CD8-positive, alpha-beta memory T cell (primary cell): ENCODE measurements at regions of chr4 and their contacts with region 1.

Region 1: DNA sequence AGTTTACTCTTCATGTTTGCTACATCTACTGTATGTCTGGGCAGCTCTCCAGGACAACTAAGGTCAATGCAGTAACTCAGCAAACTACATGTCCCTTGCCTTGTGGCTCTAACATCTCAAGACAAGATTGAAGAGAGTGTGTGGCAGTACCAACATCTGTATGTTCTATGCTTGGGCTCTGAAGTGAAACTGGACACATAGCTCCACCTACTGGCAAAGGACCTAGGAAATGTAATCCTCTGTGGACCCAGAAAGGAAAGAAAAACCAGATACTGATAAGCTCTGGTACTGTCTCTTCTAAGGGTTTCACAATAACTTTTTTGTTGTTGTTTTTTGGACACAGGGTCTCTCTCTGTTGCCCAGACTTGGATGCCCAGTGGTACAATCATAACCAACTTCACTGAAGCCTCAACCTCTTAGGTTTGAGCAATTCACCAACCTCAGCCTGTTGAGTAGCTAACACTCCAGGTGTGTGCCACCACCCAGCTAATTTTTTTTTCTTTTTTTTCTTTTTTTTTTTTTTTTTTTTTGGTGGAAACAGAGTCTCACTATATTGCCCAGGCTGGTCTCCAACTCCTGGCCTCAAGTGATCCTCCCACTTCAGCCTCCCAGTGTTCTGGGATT is 64.1 kb downstream of the QDPR start:
- DNase-seq: peak in 4 of 5 donors; percentile 34 to 53 (median 37)
- H3K4me3 ChIP-seq: no peak overlapping the region
- H3K4me3 Mint-ChIP-seq: no peak overlapping the region
- H3K27ac ChIP-seq: no peak overlapping the region
- H3K27ac Mint-ChIP-seq: no peak overlapping the region
- H3K4me1 ChIP-seq: no peaks in the 10 kb centered on the region
- H3K4me1 Mint-ChIP-seq: no peaks in the 10 kb centered on the region
- H3K27me3 ChIP-seq: no peaks in the 10 kb centered on the region
- H3K27me3 Mint-ChIP-seq: peaks cover 0 to 2% of the 10 kb centered on the region in 2 donors

Region 2: GRCh38 chr4:17324386-17324830 is 123.4 kb before region 1 on chr4:
- CTCF ChIA-PET with region 1: no interaction called
- POLR2A ChIA-PET with region 1: no interaction called
- DNase-seq: peak; percentile 6 to 50 (median 21)
- H3K4me3 ChIP-seq: no peak overlapping the region
- H3K4me3 Mint-ChIP-seq: peak overlapping the region in 6 of 7 donors; percentile 10 to 67 (median 49)
- H3K27ac ChIP-seq: no peak overlapping the region
- H3K27ac Mint-ChIP-seq: peak overlapping the region in 4 of 8 donors; percentile 30 to 72 (median 56)
- H3K4me1 ChIP-seq: peaks cover 10% of the 10 kb centered on the region
- H3K4me1 Mint-ChIP-seq: peaks cover 6 to 9% (median 8%) of the 10 kb centered on the region in 3 donors
- H3K27me3 ChIP-seq: no peaks in the 10 kb centered on the region
- H3K27me3 Mint-ChIP-seq: peaks cover 3 to 4% of the 10 kb centered on the region in 2 donors

Region 3: GRCh38 chr4:17347445-17347844 is 100.3 kb before region 1 on chr4:
- CTCF ChIA-PET with region 1: interaction called, 12 read pairs
- POLR2A ChIA-PET with region 1: no interaction called
- DNase-seq: no peak
- H3K4me3 ChIP-seq: no peak overlapping the region
- H3K4me3 Mint-ChIP-seq: no peak overlapping the region
- H3K27ac ChIP-seq: no peak overlapping the region
- H3K27ac Mint-ChIP-seq: peak overlapping the region in 1 of 8 donors; percentile 65
- H3K4me1 ChIP-seq: no peaks in the 10 kb centered on the region
- H3K4me1 Mint-ChIP-seq: no peaks in the 10 kb centered on the region
- H3K27me3 ChIP-seq: no peaks in the 10 kb centered on the region
- H3K27me3 Mint-ChIP-seq: peaks cover 0 to 3% of the 10 kb centered on the region in 2 donors

Region 4: GRCh38 chr4:17614416-17615299 is 166.9 kb after region 1 on chr4 and contains the start of gene MED28:
- CTCF ChIA-PET with region 1: no interaction called
- POLR2A ChIA-PET with region 1: no interaction called
- DNase-seq: peak; percentile 93 to 98 (median 94)
- H3K4me3 ChIP-seq: peak within 1 kb of the TSS; percentile 87
- H3K4me3 Mint-ChIP-seq: peak within 1 kb of the TSS; percentile 95 to 100 (median 98)
- H3K27ac ChIP-seq: peak within 1 kb of the TSS; percentile 94
- H3K27ac Mint-ChIP-seq: peak within 1 kb of the TSS; percentile 94 to 100 (median 98)
- H3K4me1 ChIP-seq: peaks cover 42% of the 10 kb centered on the region
- H3K4me1 Mint-ChIP-seq: peaks cover 49 to 58% (median 52%) of the 10 kb centered on the region in 3 donors
- H3K27me3 ChIP-seq: no peaks in the 10 kb centered on the region
- H3K27me3 Mint-ChIP-seq: no peaks in the 10 kb centered on the region
- total RNA-seq, gene MED28: 49.4 to 51.7 TPM